Activated CD8-positive, alpha-beta T cell treated with anti-CD3 and anti-CD28 coated beads for 36 hours (primary cell): ENCODE measurements at regions of chr2 and their contacts with region 1.

Region 1: DNA sequence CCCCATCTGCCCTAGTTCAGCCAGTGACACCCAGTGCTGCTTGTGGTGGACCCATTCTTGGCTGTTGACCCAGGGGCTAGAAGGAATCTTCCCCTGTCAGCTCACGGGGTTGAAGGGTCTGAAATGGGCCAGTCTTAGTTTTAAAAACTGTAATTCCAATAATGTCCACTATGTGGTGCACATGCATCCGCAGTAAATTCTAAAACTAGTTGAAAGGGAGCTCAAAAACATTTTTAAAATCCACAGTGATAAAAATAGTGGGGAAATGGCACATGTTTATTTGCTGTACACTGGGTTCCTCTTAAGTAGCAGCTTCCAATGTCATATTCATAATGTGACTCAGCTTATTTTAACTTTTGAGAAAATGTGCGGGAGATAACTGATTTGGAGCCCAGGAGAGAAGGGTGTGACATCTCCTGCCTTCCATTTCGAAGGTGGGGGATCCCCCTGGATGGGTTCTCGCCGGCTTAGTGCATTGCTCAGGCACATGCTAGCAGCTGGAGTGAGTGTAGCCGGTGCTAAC is 32.8 kb downstream of the GRHL1 start:
- DNase-seq: peak; percentile 30
- ATAC-seq: peak; percentile 93
- H3K4me3 Mint-ChIP-seq: no peak overlapping the region
- H3K27ac Mint-ChIP-seq: no peak overlapping the region
- H3K4me1 Mint-ChIP-seq: peaks cover 12% of the 10 kb centered on the region
- H3K27me3 Mint-ChIP-seq: peaks cover 12% of the 10 kb centered on the region
- CTCF ChIP-seq: peak; percentile 91

Region 2: GRCh38 chr2:9594366-9595054 is 389.8 kb before region 1 on chr2:
- CTCF ChIA-PET with region 1: no interaction called
- POLR2A ChIA-PET with region 1: no interaction called
- intact Hi-C with region 1: no loop called
- DNase-seq: peak; percentile 27
- ATAC-seq: peak; percentile 86
- H3K4me3 Mint-ChIP-seq: peak overlapping the region; percentile 27
- H3K27ac Mint-ChIP-seq: peak overlapping the region; percentile 83
- H3K4me1 Mint-ChIP-seq: peaks cover 80% of the 10 kb centered on the region
- H3K27me3 Mint-ChIP-seq: no peaks in the 10 kb centered on the region
- CTCF ChIP-seq: no peak

Region 3: GRCh38 chr2:9613291-9613690 is 371.0 kb before region 1 on chr2:
- CTCF ChIA-PET with region 1: no interaction called
- POLR2A ChIA-PET with region 1: no interaction called
- intact Hi-C with region 1: no loop called
- DNase-seq: no peak
- ATAC-seq: no peak
- H3K4me3 Mint-ChIP-seq: no peak overlapping the region
- H3K27ac Mint-ChIP-seq: no peak overlapping the region
- H3K4me1 Mint-ChIP-seq: peaks cover 86% of the 10 kb centered on the region
- H3K27me3 Mint-ChIP-seq: no peaks in the 10 kb centered on the region
- CTCF ChIP-seq: no peak

Region 4: GRCh38 chr2:9897331-9897737 is 86.9 kb before region 1 on chr2:
- CTCF ChIA-PET with region 1: interaction called, 11 read pairs
- POLR2A ChIA-PET with region 1: no interaction called
- intact Hi-C with region 1: no loop called
- DNase-seq: peak; percentile 87
- ATAC-seq: peak; percentile 93
- H3K4me3 Mint-ChIP-seq: no peak overlapping the region
- H3K27ac Mint-ChIP-seq: no peak overlapping the region
- H3K4me1 Mint-ChIP-seq: peaks cover 23% of the 10 kb centered on the region
- H3K27me3 Mint-ChIP-seq: no peaks in the 10 kb centered on the region
- CTCF ChIP-seq: no peak

Region 5: GRCh38 chr2:10003206-10004125 is 19.2 kb after region 1 on chr2:
- CTCF ChIA-PET with region 1: interaction called, 66 read pairs
- POLR2A ChIA-PET with region 1: no interaction called
- intact Hi-C with region 1: no loop called
- DNase-seq: no peak
- ATAC-seq: no peak
- H3K4me3 Mint-ChIP-seq: no peak overlapping the region
- H3K27ac Mint-ChIP-seq: no peak overlapping the region
- H3K4me1 Mint-ChIP-seq: no peaks in the 10 kb centered on the region
- H3K27me3 Mint-ChIP-seq: peaks cover 8% of the 10 kb centered on the region
- CTCF ChIP-seq: no peak

Region 6: GRCh38 chr2:10043906-10044601 is 59.8 kb after region 1 on chr2:
- CTCF ChIA-PET with region 1: interaction called, 127 read pairs
- POLR2A ChIA-PET with region 1: interaction called, 6 read pairs
- intact Hi-C with region 1: loop called (anchors 1 kb)
- DNase-seq: peak; percentile 95
- ATAC-seq: peak; percentile 82
- H3K4me3 Mint-ChIP-seq: peak overlapping the region; percentile 64
- H3K27ac Mint-ChIP-seq: peak overlapping the region; percentile 73
- H3K4me1 Mint-ChIP-seq: peaks cover 8% of the 10 kb centered on the region
- H3K27me3 Mint-ChIP-seq: peaks cover 2% of the 10 kb centered on the region
- CTCF ChIP-seq: no peak

Region 7: DNA sequence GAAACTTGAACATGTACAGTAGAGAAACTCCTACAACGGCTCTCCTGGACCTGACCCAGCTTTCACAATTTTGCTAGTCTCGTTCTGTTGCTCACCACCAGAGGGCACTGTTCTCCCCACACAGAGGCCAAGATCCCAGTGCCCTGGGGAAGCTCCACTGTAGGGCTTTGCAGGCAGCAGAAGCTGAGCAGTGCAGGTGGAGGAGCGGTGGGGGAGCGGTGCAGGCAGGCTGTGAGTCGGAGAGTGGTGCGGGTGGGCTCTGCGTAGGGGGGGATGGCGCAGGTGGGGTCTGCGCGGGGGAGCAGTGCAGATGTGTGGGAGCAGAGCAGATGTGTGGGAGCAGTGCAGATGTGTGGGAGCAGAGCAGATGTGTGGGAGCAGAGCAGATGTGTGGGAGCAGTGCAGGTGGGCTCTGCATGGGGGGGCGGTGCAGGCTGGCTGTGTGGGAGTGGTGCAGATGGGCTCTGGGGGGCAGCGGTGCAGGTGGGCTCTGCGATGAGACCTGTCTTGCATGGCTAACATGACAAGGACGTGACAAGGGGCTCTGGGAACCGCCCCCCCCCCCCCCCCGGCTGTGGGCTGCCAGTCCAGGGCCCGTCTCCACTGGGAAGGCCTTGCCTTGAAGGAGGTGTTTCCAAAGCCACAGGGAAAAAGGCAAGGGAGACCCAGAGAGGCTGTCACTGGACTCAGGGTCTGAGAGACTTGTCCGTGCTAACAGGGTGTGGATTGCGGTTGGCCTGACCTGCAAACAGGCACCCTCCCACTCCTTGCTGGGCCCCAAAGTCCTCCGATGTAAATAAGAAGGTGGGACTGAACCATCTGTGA is 88.6 kb after region 1 on chr2:
- CTCF ChIA-PET with region 1: interaction called, 17 read pairs
- POLR2A ChIA-PET with region 1: no interaction called
- intact Hi-C with region 1: no loop called
- DNase-seq: peak; percentile 86
- ATAC-seq: peak; percentile 97
- H3K4me3 Mint-ChIP-seq: no peak overlapping the region
- H3K27ac Mint-ChIP-seq: no peak overlapping the region
- H3K4me1 Mint-ChIP-seq: peaks cover 8% of the 10 kb centered on the region
- H3K27me3 Mint-ChIP-seq: peaks cover 39% of the 10 kb centered on the region
- CTCF ChIP-seq: peak; percentile 86

Region 8: DNA sequence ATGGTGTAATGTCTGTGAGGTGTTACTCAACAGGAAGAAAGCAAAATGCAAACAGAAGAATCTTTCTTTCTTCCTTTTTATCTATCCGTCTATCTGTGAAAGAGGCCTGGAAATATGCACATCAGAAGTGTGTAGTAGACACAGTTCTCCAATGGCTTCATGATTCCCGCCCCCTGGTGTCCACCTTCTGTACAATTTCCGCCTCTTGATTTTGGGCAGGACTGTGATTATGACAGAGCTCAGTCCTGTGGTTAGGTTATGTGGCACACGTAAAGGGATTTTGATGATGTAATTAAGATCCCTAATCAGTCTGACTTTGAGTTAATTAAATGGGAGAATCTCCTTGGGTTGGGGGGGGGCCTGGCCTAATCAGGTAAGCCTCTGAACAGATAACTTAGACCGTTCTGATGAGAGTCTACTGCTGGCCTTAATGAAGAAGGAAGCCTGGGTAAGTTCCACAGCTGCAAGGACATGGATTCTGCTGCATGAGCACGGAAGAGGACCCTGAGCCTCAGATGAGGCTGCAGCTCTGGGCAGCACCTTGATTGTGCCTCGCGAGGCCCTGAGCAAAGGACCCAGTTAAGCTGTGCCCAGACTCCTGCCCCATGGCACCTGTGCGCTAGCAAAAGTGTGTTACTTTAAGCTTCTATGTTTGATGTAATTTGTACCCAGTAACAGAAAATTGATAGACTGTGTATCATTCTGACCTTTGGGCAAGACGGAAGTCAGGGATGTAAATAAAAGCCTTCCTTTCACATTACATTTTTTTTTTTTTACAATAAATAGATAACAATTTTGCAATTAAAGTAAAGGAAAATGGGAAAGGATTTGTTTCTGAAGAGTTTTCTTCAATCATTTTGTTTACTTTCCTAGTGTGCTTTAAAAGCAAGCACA is 916.2 kb after region 1 on chr2:
- CTCF ChIA-PET with region 1: no interaction called
- POLR2A ChIA-PET with region 1: no interaction called
- intact Hi-C with region 1: no loop called
- DNase-seq: peak; percentile 19
- ATAC-seq: no peak
- H3K4me3 Mint-ChIP-seq: no peak overlapping the region
- H3K27ac Mint-ChIP-seq: no peak overlapping the region
- H3K4me1 Mint-ChIP-seq: no peaks in the 10 kb centered on the region
- H3K27me3 Mint-ChIP-seq: peaks cover 5% of the 10 kb centered on the region
- CTCF ChIP-seq: no peak